Brain microvascular endothelial cell (primary cell): ENCODE measurements at regions of chr7 and their contacts with region 1.

Region 1: DNA sequence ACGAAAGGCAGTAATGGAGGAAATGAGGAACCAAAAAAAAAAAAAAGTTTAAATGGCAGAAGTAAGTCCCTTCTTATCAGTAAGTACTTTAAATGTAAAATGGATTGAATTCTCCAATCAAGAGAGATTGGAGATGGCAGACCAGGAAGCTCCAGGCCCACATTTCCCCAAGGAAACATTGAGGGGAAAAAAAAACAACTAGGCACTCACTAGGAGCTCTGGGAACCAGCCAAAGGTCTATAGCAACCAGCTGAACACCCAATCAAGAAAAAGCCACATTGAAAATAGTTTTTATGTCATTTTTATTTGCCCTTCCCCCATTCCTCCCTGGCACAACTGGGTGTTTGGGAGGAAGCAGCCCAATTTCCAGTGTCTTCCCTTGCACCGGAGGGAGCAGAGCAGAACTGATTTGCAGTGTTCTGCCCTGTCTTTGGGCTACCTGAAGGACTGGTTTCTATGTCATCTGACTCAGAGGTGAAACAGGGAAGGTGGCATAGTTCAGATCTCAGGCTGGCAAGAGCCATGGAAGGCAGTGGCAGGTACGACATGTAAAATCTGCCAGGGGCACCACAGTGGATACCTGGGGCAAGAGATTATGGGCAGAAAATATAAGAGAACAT is 121.9 kb downstream of the SMURF1 start:
- DNase-seq: no peak
- H3K4me3 ChIP-seq: no peak overlapping the region
- H3K27ac ChIP-seq: no peak overlapping the region
- H3K27me3 ChIP-seq: no peaks in the 10 kb centered on the region
- CTCF ChIP-seq: no peak

Region 2: GRCh38 chr7:99312316-99313203 is 290.5 kb after region 1 on chr7:
- in situ Hi-C with region 1: loop called (anchors 25 kb)
- DNase-seq: peak; percentile 50
- H3K4me3 ChIP-seq: no peak overlapping the region
- H3K27ac ChIP-seq: no peak overlapping the region
- H3K27me3 ChIP-seq: no peaks in the 10 kb centered on the region
- CTCF ChIP-seq: peak; percentile 90